ENCODE measurements at regions of chr12 and their contacts with region 1.

Region 1: GRCh38 chr12:113019041-113019440 is 37.5 kb upstream of the DTX1 start:
- DNase-seq: peak; percentile 75
- H3K4me3 ChIP-seq: peak overlapping the region in 1 of 3 experiments; percentile 50
- H3K27ac ChIP-seq: peak overlapping the region; percentile 63
- H3K4me1 ChIP-seq: peaks cover 21% of the 10 kb centered on the region
- H3K27me3 ChIP-seq: no peaks in the 10 kb centered on the region
- CTCF ChIP-seq: no peak
- POLR2A ChIP-seq: peak; percentile 28

Region 2: DNA sequence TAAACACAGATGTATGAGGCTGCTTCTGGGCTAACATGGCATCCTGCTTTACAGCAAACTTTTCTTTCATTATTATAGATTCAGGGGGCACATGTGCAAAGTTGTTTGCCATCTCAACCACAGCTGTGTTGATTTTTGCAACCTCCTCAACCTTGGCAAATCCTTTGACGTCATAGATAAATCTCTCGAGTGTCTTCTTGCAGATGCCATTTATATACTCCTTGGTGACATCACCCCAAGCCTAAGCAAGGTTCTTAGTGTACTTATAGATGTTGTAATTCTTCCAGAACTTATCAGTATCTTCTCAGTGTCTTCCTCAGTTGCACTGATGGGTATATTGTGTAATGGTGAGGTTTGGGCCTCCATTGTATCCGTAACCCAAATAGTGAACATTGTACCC is 362.9 kb before region 1 on chr12:
- CTCF ChIA-PET with region 1: no interaction called
- POLR2A ChIA-PET with region 1: no interaction called
- dilution Hi-C with region 1: no loop called
- intact Hi-C with region 1: no loop called
- DNase-seq: no peak
- H3K4me3 ChIP-seq: no peak overlapping the region
- H3K27ac ChIP-seq: no peak overlapping the region
- H3K4me1 ChIP-seq: no peaks in the 10 kb centered on the region
- H3K27me3 ChIP-seq: no peaks in the 10 kb centered on the region
- CTCF ChIP-seq: no peak
- POLR2A ChIP-seq: no peak

Region 3: GRCh38 chr12:112971248-112971647 is 47.8 kb before region 1 on chr12:
- CTCF ChIA-PET with region 1: no interaction called
- POLR2A ChIA-PET with region 1: no interaction called
- dilution Hi-C with region 1: no loop called
- intact Hi-C with region 1: loop called (anchors 1 kb)
- DNase-seq: peak; percentile 38
- H3K4me3 ChIP-seq: no peak overlapping the region
- H3K27ac ChIP-seq: no peak overlapping the region
- H3K4me1 ChIP-seq: peaks cover 9% of the 10 kb centered on the region
- H3K27me3 ChIP-seq: no peaks in the 10 kb centered on the region
- CTCF ChIP-seq: no peak
- POLR2A ChIP-seq: no peak

Region 4: DNA sequence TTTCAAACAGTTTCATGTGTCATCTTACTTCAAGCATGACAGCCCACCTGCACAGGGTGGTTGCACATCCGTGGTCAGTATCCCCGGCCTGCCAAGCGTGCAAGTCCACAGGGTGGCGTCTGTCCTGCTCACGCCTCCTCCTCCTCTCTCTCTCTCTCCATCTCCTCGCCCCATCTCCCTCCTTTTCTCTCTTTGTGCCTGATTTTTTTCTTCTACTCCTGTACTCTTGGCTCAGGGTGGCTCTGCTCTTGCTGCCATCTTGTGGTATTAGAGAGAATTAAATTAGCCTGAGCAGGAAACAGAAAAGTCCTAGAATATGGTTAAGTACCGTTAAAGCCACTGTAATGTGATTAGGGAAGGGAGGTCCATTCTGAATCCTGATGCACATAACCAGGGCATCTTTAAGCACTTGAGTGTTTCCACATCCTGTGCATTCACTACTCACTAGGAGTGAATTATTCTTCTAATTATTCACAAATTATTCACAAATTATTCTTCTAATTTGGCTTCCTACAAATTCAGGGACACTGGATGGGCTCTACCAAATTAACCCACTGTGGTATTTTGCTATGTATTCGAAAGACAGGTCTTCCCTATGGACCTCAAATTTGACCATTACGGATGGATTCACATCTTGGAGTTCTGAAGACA is 12.0 kb after region 1 on chr12:
- CTCF ChIA-PET with region 1: interaction called, 17 read pairs
- POLR2A ChIA-PET with region 1: no interaction called
- dilution Hi-C with region 1: no loop called
- intact Hi-C with region 1: no loop called
- DNase-seq: peak; percentile 77
- H3K4me3 ChIP-seq: no peak overlapping the region
- H3K27ac ChIP-seq: no peak overlapping the region
- H3K4me1 ChIP-seq: no peaks in the 10 kb centered on the region
- H3K27me3 ChIP-seq: no peaks in the 10 kb centered on the region
- CTCF ChIP-seq: peak; percentile 58 to 65
- POLR2A ChIP-seq: no peak

Measured in endothelial cell of umbilical vein (primary cell).